ENCODE measurements at regions of chr12 and their contacts with region 1.

Region 1: GRCh38 chr12:7995266-7995963 is 37.1 kb upstream of the FOXJ2 start:
- DNase-seq: peak; percentile 89
- H3K4me3 ChIP-seq: no peak overlapping the region
- H3K27ac ChIP-seq: no peak overlapping the region
- H3K4me1 ChIP-seq: no peaks in the 10 kb centered on the region
- H3K27me3 ChIP-seq: no peaks in the 10 kb centered on the region
- CTCF ChIP-seq: peak; percentile 85 to 90 (median 86)
- POLR2A ChIP-seq: no peak

Region 2: DNA sequence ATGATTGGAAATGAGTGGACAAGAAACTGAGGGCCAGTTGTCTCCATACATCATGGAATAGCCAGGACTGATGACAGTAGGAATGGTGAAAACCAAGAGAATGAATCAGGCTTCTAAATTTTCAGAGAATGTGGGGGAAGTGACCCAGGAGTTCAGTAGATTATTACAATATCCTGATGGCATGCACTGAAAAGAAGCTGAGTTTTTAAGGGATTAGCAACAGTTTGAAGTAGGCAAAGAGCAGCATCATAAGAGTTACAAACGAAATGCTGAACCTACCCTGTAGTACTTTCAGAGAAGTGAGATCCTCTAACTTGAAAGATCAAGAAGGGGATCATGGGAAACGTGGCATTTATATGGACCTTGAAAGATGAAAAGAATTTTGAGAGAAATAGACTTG is 135.9 kb before region 1 on chr12:
- intact Hi-C with region 1: loop called (anchors 10 kb)
- DNase-seq: no peak
- H3K4me3 ChIP-seq: no peak overlapping the region
- H3K27ac ChIP-seq: no peak overlapping the region
- H3K4me1 ChIP-seq: no peaks in the 10 kb centered on the region
- H3K27me3 ChIP-seq: no peaks in the 10 kb centered on the region
- CTCF ChIP-seq: no peak
- POLR2A ChIP-seq: no peak

Region 3: DNA sequence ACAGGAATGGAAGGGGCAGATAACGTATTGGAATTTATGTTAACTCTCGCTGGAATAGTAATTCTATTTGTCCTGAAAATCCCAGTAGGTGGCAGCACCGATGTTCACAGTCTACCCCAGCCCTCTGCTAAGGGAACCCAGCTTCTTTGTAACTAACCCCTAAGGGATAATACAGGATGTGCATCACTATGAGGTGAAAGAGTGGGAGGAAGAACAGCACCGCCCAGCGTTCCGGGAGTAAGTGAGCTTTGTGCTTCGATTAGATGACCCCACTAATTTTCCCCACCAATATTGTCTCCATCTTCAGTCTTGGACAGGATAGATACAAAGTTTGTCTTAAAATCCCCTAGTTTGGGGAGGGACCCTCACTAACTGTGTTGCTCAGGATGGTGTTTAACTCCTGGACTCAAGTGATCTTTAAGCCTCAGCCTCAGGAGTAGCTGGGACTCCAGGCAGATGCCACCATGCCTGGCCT is 62.1 kb before region 1 on chr12:
- intact Hi-C with region 1: loop called (anchors 10 kb)
- DNase-seq: peak; percentile 80
- H3K4me3 ChIP-seq: peak overlapping the region in 1 of 2 donors; percentile 61
- H3K27ac ChIP-seq: peak overlapping the region; percentile 71 to 85
- H3K4me1 ChIP-seq: peaks cover 5% of the 10 kb centered on the region
- H3K27me3 ChIP-seq: no peaks in the 10 kb centered on the region
- CTCF ChIP-seq: peak; percentile 51 to 78 (median 74)
- POLR2A ChIP-seq: no peak

Measured in testis (tissue), 5 donors.